Esophagus muscularis mucosa (tissue), 4 donors: ENCODE measurements at regions of chr1 and their contacts with region 1.

Region 1: GRCh38 chr1:172449585-172450534 is 6.0 kb upstream of the PIGC start:
- DNase-seq: no peak
- H3K4me3 ChIP-seq: peak overlapping the region in 3 of 4 donors; percentile 11 to 26 (median 19)
- H3K27ac ChIP-seq: no peak overlapping the region
- H3K4me1 ChIP-seq: peaks cover 0 to 10% (median 8%) of the 10 kb centered on the region in 4 donors
- H3K27me3 ChIP-seq: no peaks in the 10 kb centered on the region
- CTCF ChIP-seq: peak; percentile 84 to 97 (median 88)
- EP300 ChIP-seq: no peak
- POLR2A ChIP-seq: no peak

Region 2: GRCh38 chr1:172708452-172708851 is 258.6 kb after region 1 on chr1:
- intact Hi-C with region 1: loop called (anchors 10 kb)
- DNase-seq: no peak
- H3K4me3 ChIP-seq: no peak overlapping the region
- H3K27ac ChIP-seq: no peak overlapping the region
- H3K4me1 ChIP-seq: no peaks in the 10 kb centered on the region
- H3K27me3 ChIP-seq: no peaks in the 10 kb centered on the region
- CTCF ChIP-seq: no peak
- EP300 ChIP-seq: no peak
- POLR2A ChIP-seq: no peak